KBM-7 (cell line): ENCODE measurements at regions of chr12 and their contacts with region 1.

Region 1: DNA sequence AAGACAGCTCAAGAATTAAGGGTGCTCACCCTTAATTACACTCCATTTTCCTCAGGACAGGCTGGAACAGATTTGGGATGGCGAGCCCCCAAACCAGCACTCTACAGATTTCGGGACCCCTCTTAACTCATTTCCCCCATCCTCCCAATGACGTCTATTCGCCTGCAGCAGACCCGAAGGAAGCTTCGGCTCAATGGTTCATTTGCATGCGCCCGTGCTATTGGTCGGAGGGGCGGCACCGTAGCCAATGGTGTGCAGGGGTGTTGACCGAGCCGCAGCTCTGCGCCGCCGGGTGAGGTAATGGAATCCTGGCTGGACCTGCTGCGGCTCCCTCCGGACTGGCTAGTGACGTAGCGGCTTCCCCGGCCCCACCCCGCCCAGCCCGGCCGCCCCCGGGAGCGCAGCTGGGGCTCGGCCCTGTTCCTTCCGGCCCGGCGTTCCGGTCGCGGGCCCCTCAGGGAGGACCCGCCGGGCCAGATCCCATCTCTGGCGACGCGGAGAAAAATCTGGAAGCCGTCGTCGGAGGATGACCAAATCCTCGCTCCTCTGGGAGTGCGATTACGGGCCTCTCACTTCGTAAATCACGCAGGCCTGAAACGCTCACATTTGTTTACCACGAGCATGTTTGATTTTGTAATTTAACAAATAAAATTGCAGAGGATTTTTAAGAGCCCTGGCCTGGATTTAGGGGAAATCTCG is 18.3 kb upstream of the NR4A1 start:
- DNase-seq: peak; percentile 90

Region 2: DNA sequence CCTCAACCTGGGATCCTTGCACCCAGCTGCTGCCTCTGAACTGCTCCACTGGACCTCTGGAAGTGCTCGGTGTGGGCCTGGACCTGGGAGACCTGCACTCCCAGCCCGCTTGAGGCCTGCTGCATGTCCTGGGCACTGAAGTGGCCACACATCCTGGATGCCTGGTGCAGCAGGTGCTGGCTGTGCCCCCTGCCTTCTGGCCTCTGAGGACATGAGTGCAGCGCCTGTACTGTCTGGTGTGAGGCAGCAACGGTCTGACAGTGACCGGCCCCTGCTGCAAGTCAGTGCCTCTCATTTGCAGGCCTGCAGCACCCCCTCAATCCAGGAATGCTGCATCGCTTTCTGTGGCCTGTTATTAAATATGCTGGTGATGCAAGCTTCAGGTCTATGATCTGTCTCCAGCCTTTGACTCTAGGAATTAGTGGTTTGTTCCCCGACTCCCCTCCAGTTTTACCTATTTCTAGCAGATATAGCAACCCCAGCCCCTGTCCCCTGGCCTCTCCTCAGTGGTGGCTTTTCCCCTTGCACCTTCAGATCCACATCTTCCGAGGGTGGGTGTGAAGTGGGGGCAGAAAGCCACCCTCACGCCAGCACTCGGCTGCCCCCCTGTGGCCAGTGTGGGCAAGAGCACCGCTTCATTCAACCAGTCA is 50.2 kb after region 1 on chr12:
- in situ Hi-C with region 1: loop called (anchors 10 kb)
- DNase-seq: peak; percentile 78

Region 3: GRCh38 chr12:52789637-52790426 is 756.9 kb after region 1 on chr12:
- in situ Hi-C with region 1: no loop called
- DNase-seq: peak; percentile 21